Heart left ventricle (tissue), 16 donors: ENCODE measurements at regions of chrX and their contacts with region 1.

Region 1: DNA sequence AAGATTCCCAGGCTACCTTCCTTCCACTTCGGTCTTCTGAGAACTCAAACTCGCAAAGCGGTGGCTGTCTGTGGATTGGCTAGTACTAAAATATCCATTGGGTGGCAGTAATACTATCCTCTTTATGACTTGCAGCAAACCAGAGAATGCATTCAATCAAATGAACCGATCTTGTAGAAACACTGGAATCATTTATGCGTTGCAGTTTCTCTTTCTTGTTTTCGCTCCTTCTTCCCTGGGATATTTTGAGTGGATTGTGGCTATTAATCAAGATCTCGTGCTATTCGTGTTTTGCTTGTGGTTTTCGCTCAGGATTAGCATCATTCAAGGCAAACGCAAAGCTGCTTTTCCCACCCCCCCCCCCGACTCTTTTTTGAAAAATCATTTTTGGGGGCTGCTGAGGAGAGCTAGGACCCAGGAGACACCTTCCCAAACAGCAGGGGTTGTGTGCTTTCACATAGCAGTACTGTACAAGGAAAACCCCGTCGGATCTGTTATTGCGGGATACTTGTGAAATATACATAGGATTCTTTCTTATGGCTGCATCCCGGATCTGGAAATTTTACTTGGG is at the start of gene IL1RAPL1:
- DNase-seq: no peak
- ATAC-seq: peak; percentile 71 to 84 (median 83)
- H3K4me3 ChIP-seq: peak within 1 kb of the TSS; percentile 19 to 65 (median 49)
- H3K27ac ChIP-seq: peak within 1 kb of the TSS in 10 of 12 donors; percentile 8 to 59 (median 37)
- H3K4me1 ChIP-seq: no peaks in the 10 kb centered on the region
- H3K27me3 ChIP-seq: peaks cover 0 to 39% (median 0%) of the 10 kb centered on the region in 9 donors
- CTCF ChIP-seq: peak in 9 of 12 donors; percentile 9 to 52 (median 28)
- POLR2A ChIP-seq: no peak
- total RNA-seq, gene IL1RAPL1: 1.6 to 4.7 (median 2.9) TPM

Region 2: GRCh38 chrX:28379103-28379502 is 208.0 kb before region 1 on chrX:
- intact Hi-C with region 1: no loop called
- DNase-seq: no peak
- ATAC-seq: no peak
- H3K4me3 ChIP-seq: no peak overlapping the region
- H3K27ac ChIP-seq: no peak overlapping the region
- H3K4me1 ChIP-seq: no peaks in the 10 kb centered on the region
- H3K27me3 ChIP-seq: no peaks in the 10 kb centered on the region
- CTCF ChIP-seq: no peak
- POLR2A ChIP-seq: no peak

Region 3: GRCh38 chrX:28498658-28499057 is 88.4 kb before region 1 on chrX:
- intact Hi-C with region 1: no loop called
- DNase-seq: no peak
- ATAC-seq: no peak
- H3K4me3 ChIP-seq: no peak overlapping the region
- H3K27ac ChIP-seq: no peak overlapping the region
- H3K4me1 ChIP-seq: no peaks in the 10 kb centered on the region
- H3K27me3 ChIP-seq: no peaks in the 10 kb centered on the region
- CTCF ChIP-seq: no peak
- POLR2A ChIP-seq: no peak

Region 4: DNA sequence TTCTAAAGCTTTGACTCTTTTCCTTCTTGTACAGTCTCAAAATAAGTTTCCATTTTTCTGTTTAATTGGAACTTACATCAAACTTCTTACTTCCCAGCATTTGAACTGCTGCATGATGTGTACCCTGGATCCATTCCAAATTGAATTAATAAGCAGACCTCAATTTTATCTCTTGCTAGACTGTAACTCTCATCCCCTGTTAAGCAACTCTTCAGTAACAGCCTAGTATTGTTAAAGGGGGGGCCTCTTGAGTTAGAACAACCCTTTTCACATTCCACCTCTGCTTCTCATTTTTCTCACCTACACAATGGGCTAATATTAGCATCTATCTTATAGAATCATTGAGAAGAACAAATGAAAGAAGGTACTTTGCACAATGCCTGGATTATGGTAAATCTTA is 169.6 kb after region 1 on chrX:
- intact Hi-C with region 1: loop called in 1 of 10 experiments (anchors 10 kb)
- DNase-seq: no peak
- ATAC-seq: peak; percentile 53 to 85 (median 75)
- H3K4me3 ChIP-seq: no peak overlapping the region
- H3K27ac ChIP-seq: peak overlapping the region in 2 of 12 donors; percentile 13 to 51
- H3K4me1 ChIP-seq: peaks cover 0 to 6% (median 0%) of the 10 kb centered on the region in 12 donors
- H3K27me3 ChIP-seq: no peaks in the 10 kb centered on the region
- CTCF ChIP-seq: no peak
- POLR2A ChIP-seq: no peak

Region 5: GRCh38 chrX:28847423-28847822 is 260.4 kb after region 1 on chrX:
- intact Hi-C with region 1: loop called in 1 of 10 experiments (anchors 10 kb)
- DNase-seq: peak in 4 of 5 donors; percentile 15 to 85 (median 29)
- ATAC-seq: peak; percentile 72 to 92 (median 83)
- H3K4me3 ChIP-seq: peak overlapping the region in 1 of 12 donors; percentile 25
- H3K27ac ChIP-seq: peak overlapping the region in 4 of 12 donors; percentile 2 to 41 (median 20)
- H3K4me1 ChIP-seq: peaks cover 0 to 2% (median 0%) of the 10 kb centered on the region in 12 donors
- H3K27me3 ChIP-seq: no peaks in the 10 kb centered on the region
- CTCF ChIP-seq: no peak
- POLR2A ChIP-seq: no peak

Region 6: GRCh38 chrX:29044423-29045184 is 457.5 kb after region 1 on chrX:
- intact Hi-C with region 1: loop called in 5 of 10 experiments (anchors 5 to 10 kb)
- DNase-seq: no peak
- ATAC-seq: no peak
- H3K4me3 ChIP-seq: no peak overlapping the region
- H3K27ac ChIP-seq: no peak overlapping the region
- H3K4me1 ChIP-seq: peaks cover 0 to 5% (median 0%) of the 10 kb centered on the region in 12 donors
- H3K27me3 ChIP-seq: no peaks in the 10 kb centered on the region
- CTCF ChIP-seq: peak in 6 of 12 donors; percentile 9 to 29 (median 23)
- POLR2A ChIP-seq: no peak

Region 7: DNA sequence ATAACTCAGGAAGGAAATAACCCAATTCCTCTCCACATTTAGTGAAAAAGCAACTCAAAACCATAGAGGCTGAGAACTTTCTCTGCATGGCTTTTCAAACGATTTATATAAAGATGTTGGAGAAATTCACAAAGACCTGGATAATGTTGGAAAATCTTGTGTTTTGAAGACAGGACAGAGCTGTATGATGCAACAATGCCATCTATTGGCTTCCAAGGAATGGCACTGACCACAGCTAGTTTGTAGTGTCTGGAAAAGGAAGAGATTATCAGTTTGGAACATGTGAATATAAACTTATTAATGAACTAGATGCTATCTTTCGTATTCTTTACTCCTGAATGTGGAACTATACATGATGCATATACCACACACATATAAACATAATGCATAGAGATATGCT is 503.7 kb after region 1 on chrX:
- intact Hi-C with region 1: loop called in 6 of 10 experiments (anchors 2 to 10 kb)
- DNase-seq: peak in 1 of 5 donors; percentile 4
- ATAC-seq: peak in 2 of 4 donors; percentile 49 to 52
- H3K4me3 ChIP-seq: no peak overlapping the region
- H3K27ac ChIP-seq: no peak overlapping the region
- H3K4me1 ChIP-seq: no peaks in the 10 kb centered on the region
- H3K27me3 ChIP-seq: no peaks in the 10 kb centered on the region
- CTCF ChIP-seq: peak in 11 of 12 donors; percentile 15 to 54 (median 42)
- POLR2A ChIP-seq: no peak

Region 8: GRCh38 chrX:29231800-29232199 is 644.7 kb after region 1 on chrX:
- intact Hi-C with region 1: loop called in 1 of 10 experiments (anchors 10 kb)
- DNase-seq: no peak
- ATAC-seq: no peak
- H3K4me3 ChIP-seq: no peak overlapping the region
- H3K27ac ChIP-seq: no peak overlapping the region
- H3K4me1 ChIP-seq: no peaks in the 10 kb centered on the region
- H3K27me3 ChIP-seq: no peaks in the 10 kb centered on the region
- CTCF ChIP-seq: peak in 8 of 12 donors; percentile 6 to 34 (median 26)
- POLR2A ChIP-seq: no peak